Endothelial cell of umbilical vein (primary cell): ENCODE measurements at regions of chr17 and their contacts with region 1.

Region 1: GRCh38 chr17:70563281-70563820 is 394.0 kb downstream of the KCNJ2 start:
- DNase-seq: peak; percentile 92
- H3K4me3 ChIP-seq: peak overlapping the region in 1 of 3 experiments; percentile 30
- H3K27ac ChIP-seq: peak overlapping the region; percentile 25
- H3K4me1 ChIP-seq: peaks cover 31% of the 10 kb centered on the region
- H3K27me3 ChIP-seq: no peaks in the 10 kb centered on the region
- CTCF ChIP-seq: no peak
- POLR2A ChIP-seq: no peak

Region 2: DNA sequence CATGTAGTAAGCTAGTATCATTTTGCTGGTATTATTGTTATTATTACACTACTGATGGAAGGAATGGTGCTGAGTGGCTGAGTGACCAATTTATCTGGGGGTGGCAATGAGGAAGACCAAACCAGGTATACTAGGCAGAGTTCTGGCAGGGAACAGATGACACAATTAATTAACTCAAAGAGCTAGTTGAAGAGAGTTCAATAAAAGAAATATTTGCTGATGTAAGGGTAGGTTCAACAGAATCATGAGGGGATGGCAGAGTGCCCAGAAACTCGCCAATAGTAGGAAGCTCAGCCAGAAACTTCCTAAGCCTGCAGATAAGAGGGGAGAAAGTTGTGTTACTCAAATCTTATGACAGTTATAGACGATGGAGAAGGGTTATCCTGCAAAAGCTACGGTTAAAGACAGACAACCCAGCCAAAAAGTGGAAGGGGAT is 41.5 kb before region 1 on chr17:
- CTCF ChIA-PET with region 1: no interaction called
- POLR2A ChIA-PET with region 1: no interaction called
- dilution Hi-C with region 1: no loop called
- intact Hi-C with region 1: no loop called
- DNase-seq: peak; percentile 72
- H3K4me3 ChIP-seq: no peak overlapping the region
- H3K27ac ChIP-seq: no peak overlapping the region
- H3K4me1 ChIP-seq: peaks cover 2% of the 10 kb centered on the region
- H3K27me3 ChIP-seq: no peaks in the 10 kb centered on the region
- CTCF ChIP-seq: no peak
- POLR2A ChIP-seq: no peak

Region 3: GRCh38 chr17:70597774-70598173 is 34.4 kb after region 1 on chr17:
- CTCF ChIA-PET with region 1: interaction called, 3 read pairs
- POLR2A ChIA-PET with region 1: no interaction called
- dilution Hi-C with region 1: no loop called
- intact Hi-C with region 1: loop called (anchors 5 kb)
- DNase-seq: peak; percentile 43
- H3K4me3 ChIP-seq: no peak overlapping the region
- H3K27ac ChIP-seq: no peak overlapping the region
- H3K4me1 ChIP-seq: no peaks in the 10 kb centered on the region
- H3K27me3 ChIP-seq: no peaks in the 10 kb centered on the region
- CTCF ChIP-seq: no peak
- POLR2A ChIP-seq: no peak